Lower leg skin (tissue), 4 donors: ENCODE measurements at regions of chr7 and their contacts with region 1.

Region 1: DNA sequence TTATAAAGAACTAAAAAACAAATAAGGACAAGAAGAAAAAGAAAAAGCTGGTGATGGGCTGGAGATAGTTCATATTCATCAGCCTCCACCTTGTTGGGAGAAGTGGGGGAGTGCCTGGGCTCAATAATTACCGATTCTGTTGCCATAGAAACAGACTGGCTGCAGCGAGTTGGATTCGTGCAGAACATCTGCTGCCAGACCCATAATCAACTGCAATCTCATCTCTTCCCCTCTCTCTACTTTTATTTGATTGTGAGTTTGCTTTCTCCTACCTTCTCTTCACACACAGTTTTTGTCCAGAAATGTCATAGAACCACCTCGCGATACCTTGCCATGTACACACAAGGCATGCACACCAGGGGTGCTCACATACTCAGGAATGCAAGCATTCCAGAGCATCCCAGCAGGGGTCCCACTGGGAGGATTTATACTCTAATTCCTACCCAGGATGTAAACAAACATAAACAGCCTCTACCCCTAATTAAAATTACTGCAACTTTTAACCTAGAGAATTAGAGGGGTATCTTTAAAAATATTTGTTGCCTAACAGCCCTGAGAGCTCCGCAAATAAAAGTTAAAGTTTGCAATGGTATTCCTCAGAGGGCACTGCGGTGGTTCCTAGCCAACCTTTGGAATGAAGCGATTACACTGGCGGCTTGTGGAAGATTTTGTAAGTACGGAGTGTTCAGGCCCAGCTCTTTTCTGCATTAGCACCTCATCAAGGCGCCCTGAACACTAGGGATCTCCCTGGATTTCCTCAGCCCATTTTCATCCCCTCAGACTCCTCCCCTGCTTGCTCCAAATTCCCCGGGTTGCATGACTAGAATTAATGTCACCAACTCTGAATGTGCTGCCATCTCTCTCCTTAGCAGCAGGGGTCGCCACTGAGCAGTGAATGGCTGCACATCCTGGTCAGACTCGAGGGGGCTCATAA is 262.4 kb upstream of the AOAH start:
- DNase-seq: peak in 1 of 2 donors; percentile 27
- H3K4me3 ChIP-seq: no peak overlapping the region
- CTCF ChIP-seq: no peak
- POLR2A ChIP-seq: no peak

Region 2: DNA sequence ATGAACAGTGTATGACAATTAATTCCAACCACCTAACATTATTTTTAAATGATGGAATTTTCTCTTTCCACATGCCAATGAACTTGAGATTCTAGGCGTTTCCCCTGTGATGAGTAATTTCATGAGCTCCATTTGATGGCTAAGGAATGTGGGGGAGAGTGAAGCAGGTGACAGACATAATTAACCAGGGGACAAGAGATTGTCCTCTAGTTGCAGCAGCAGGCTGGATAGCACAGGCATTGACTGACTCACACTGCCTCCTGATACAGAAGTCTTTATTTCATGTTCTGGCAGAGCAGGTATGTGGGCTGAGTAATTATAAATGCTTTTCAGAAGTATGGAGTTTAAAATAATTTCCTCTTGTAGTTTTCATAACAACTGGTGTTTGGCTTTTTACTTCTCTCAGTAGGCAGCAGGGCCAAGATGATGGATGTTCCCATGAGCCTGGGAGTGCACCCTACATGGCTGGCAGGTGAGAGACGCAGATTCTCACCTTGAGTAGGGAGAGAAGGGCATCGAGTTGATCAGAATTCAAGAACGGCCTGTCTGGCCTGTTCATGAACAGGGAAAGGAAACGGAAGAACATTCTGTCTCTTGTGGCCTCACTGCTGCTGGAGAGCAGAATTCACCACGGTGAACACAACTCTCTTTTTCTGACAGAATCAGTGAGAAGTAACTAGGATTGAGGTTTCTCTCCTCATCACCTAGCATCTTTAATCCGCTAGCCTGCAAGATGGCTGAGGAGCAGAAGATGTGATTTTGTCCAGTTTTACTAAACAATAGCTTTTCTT is 381.2 kb before region 1 on chr7:
- intact Hi-C with region 1: no loop called
- DNase-seq: no peak
- H3K4me3 ChIP-seq: no peak overlapping the region
- CTCF ChIP-seq: no peak
- POLR2A ChIP-seq: no peak

Region 3: DNA sequence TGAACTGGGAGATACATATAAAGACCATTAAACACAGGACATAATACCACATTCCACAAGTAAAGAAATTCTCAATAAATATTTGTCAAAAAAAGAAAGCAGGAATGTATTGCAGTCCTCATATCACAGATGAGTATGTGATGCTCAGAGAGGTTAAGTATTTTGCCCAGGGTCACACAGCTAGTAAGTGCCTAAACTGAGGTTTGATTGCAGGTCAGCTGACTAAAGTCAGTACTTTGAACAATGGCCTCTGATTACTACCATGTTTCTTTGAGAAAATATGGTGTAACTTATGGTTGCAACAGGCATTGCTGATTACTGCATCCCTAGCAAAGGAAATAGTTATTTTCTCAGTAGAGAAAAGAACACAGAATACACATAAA is 194.8 kb after region 1 on chr7:
- intact Hi-C with region 1: loop called (anchors 10 kb)
- DNase-seq: no peak
- H3K4me3 ChIP-seq: no peak overlapping the region
- CTCF ChIP-seq: no peak
- POLR2A ChIP-seq: no peak